Activated CD4-positive, alpha-beta T cell treated with anti-CD3 and anti-CD28 coated beads for 36 hours (primary cell): ENCODE measurements at regions of chr1 and their contacts with region 1.

Region 1: GRCh38 chr1:154404984-154405761 is at the start of gene IL6R:
- DNase-seq: peak; percentile 85
- ATAC-seq: peak; percentile 35
- H3K4me3 Mint-ChIP-seq: peak within 1 kb of the TSS; percentile 83
- H3K27ac Mint-ChIP-seq: peak within 1 kb of the TSS; percentile 95
- H3K4me1 Mint-ChIP-seq: peaks cover 78% of the 10 kb centered on the region
- H3K27me3 Mint-ChIP-seq: no peaks in the 10 kb centered on the region
- total RNA-seq, gene IL6R: 13.1 to 14.0 TPM

Region 2: DNA sequence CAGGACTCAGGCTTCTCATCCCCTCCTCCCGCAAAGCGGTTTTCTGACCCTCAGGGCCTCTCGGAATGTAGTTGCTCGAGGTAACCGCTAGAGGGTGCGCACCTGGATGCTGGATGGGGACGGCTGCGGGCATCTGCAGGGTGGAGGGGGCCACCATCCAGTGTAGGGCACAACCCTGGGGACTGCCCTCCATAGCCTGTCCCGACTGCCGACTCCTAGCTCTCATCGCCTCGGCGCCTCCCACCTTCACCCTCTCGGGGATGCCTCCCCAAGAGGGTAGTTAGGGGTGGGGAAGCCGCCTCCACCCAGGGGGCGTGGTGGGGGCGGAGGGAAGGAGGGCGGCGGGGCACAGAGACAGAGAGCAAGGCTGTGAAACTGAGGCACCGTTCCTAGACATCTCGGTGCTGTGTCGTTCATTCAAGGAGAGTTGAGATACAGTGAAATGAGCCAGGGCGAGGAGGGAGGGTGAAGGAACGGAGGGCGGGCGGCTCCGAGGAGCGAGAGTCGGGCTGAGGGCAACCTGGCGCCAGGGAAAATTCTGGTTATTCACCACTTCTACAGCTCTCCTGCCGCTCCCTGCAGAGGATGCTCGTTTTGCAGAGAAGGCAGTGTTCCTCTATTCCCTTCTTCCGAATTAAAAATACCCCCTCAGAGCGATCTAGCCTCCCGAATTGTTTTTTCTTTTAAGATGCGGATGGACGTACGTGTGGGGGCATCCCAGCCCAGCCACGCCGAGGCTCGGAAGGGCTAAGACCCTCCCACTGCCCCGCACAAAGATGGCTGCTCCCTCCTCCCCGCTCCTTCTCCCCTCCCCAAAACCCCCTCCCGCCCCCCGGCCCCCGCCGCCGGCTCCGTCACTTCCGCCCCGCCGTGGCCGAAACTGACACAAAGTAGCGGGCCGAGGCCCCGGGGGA is 80.2 kb before region 1 on chr1 and contains the start of gene ATP8B2:
- CTCF ChIA-PET with region 1: interaction called, 7 read pairs
- POLR2A ChIA-PET with region 1: no interaction called
- intact Hi-C with region 1: loop called in 1 of 2 experiments (anchors 1 kb)
- DNase-seq: peak; percentile 92
- ATAC-seq: peak; percentile 70
- H3K4me3 Mint-ChIP-seq: peak within 1 kb of the TSS; percentile 99
- H3K27ac Mint-ChIP-seq: peak within 1 kb of the TSS; percentile 94
- H3K4me1 Mint-ChIP-seq: peaks cover 39% of the 10 kb centered on the region
- H3K27me3 Mint-ChIP-seq: no peaks in the 10 kb centered on the region
- total RNA-seq, gene ATP8B2: 48.2 TPM

Region 3: GRCh38 chr1:154352581-154353459 is 52.4 kb before region 1 on chr1:
- CTCF ChIA-PET with region 1: interaction called, 5 read pairs
- POLR2A ChIA-PET with region 1: no interaction called
- intact Hi-C with region 1: loop called (anchors 2 to 5 kb)
- DNase-seq: peak; percentile 80
- ATAC-seq: peak; percentile 84
- H3K4me3 Mint-ChIP-seq: peak overlapping the region; percentile 72
- H3K27ac Mint-ChIP-seq: peak overlapping the region; percentile 81
- H3K4me1 Mint-ChIP-seq: peaks cover 32% of the 10 kb centered on the region
- H3K27me3 Mint-ChIP-seq: no peaks in the 10 kb centered on the region

Region 4: DNA sequence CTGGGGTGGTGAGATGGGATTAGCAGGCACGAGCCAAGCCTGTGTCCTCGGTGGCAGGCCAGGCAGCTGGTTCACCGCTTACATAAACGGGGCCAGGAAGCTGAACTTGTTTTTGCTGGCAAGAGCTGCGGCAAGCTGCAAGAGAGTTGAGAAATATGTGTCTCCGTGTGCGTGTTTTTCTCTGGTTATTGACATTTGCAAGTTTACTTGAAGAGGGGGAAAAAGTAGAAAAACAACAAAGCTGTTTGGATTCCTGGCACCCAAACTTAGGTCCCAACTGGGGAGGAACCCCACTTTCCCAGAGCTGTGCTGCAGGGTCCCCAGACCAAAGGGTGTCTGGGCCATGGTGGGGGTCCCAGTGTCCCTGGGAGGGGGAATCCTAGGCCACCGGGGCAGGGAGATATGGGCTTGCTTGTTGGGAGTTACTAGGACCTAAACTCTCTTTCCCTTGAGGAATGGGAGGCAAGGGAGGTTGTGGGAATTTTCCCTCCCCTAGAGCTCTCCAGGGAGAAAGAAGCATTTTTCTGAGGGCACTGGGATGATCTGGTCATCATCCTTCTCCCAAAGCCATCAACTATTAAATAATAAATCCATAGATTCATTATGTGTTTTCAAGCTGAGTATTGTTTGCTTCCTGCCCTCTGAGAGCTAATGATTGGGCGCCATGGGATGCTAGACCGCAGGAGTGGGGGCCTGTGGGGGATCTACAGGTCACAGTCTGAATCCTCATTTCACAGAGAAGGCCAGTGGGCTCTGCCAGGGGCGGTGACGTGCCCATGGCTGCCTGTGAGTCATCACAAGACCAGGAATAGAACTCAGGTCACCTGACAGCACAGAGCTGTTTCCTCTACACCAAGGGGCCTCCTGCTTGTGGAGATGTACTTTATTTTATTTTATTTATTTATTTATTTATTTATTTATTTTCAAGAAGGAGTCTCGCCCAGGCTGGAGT is 14.7 kb after region 1 on chr1:
- CTCF ChIA-PET with region 1: interaction called, 20 read pairs
- POLR2A ChIA-PET with region 1: interaction called, 3 read pairs
- intact Hi-C with region 1: loop called in 1 of 2 experiments (anchors 2 kb)
- DNase-seq: peak; percentile 80
- ATAC-seq: peak; percentile 78
- H3K4me3 Mint-ChIP-seq: peak overlapping the region; percentile 61
- H3K27ac Mint-ChIP-seq: peak overlapping the region; percentile 92
- H3K4me1 Mint-ChIP-seq: peaks cover 89% of the 10 kb centered on the region
- H3K27me3 Mint-ChIP-seq: no peaks in the 10 kb centered on the region

Region 5: GRCh38 chr1:154442006-154442740 is 37.0 kb after region 1 on chr1:
- CTCF ChIA-PET with region 1: interaction called, 19 read pairs
- POLR2A ChIA-PET with region 1: interaction called, 12 read pairs
- intact Hi-C with region 1: loop called (anchors 1 to 2 kb)
- DNase-seq: peak; percentile 37
- ATAC-seq: no peak
- H3K4me3 Mint-ChIP-seq: no peak overlapping the region
- H3K27ac Mint-ChIP-seq: peak overlapping the region; percentile 63
- H3K4me1 Mint-ChIP-seq: peaks cover 72% of the 10 kb centered on the region
- H3K27me3 Mint-ChIP-seq: no peaks in the 10 kb centered on the region

Region 6: DNA sequence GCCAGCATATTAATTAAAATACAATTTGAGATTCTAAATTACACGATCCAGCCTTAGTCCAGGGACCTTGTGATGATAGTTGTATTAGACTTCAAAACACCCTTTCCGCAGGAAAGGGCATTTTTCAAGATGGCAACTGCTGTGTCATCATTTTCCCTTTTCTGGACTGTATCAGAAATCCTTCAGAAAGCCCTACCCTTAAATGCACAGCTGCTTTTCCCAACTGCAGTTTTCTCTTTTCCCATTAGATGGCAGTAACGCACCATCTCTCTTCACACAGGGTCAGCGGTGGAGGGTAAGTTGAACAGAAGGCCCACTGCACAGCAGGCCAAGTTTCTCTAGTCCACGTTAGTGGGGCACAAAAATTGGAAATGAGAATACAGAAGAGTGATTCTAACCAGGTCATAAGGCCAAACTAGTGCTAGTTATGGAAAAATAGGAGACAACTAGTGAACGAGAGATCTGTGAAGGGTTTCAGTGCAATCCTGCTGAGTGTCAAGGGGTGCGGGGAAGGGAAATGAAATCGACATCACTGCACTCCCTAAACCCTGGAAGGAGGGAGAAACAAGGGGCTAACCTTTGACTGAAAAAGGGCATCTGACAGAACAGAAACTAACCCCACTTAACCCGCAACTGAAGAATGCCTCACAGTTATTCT is 74.7 kb after region 1 on chr1:
- CTCF ChIA-PET with region 1: interaction called, 4 read pairs
- POLR2A ChIA-PET with region 1: interaction called, 3 read pairs
- intact Hi-C with region 1: loop called (anchors 2 kb)
- DNase-seq: peak; percentile 67
- ATAC-seq: peak; percentile 84
- H3K4me3 Mint-ChIP-seq: no peak overlapping the region
- H3K27ac Mint-ChIP-seq: no peak overlapping the region
- H3K4me1 Mint-ChIP-seq: peaks cover 27% of the 10 kb centered on the region
- H3K27me3 Mint-ChIP-seq: no peaks in the 10 kb centered on the region

Region 7: DNA sequence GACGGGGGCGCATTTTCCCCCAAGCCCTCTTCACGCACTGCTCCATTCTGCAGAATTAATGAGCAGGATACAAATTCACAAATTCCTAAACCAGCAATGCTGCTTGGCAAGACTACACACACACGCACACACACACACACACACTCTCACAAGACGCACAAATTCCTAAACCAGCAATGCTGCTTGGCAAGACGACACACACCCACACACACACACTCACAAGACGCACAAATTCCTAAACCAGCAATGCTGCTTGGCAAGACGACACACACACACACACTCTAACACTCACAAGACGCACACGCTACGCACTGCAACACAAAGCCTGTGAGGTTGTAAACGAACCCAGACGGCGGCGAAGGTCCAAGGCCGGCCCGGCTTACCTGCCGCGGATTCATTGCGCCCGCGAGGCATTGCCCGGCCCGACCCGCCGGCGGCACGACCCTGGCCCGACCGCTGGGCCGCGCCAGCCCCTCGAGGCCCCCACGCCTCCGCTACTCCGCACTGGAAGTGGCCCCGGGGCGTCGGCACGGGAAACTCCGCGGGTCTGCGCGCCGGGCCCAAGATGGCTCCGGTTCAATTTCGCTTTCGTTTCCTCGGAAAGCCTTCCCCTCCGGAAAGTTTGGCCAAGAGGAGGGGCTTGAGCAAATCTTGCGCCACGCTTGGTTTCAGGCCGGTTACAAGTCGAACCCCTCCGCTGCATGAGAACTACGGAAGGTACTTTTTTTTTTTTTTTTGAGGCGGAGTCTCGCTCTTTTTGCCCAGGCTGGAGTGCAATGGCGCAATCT is 202.6 kb after region 1 on chr1 and contains the start of gene ADAR:
- CTCF ChIA-PET with region 1: no interaction called
- POLR2A ChIA-PET with region 1: no interaction called
- intact Hi-C with region 1: loop called in 1 of 2 experiments (anchors 5 kb)
- DNase-seq: peak; percentile 95
- ATAC-seq: peak; percentile 69
- H3K4me3 Mint-ChIP-seq: peak within 1 kb of the TSS; percentile 95
- H3K27ac Mint-ChIP-seq: peak within 1 kb of the TSS; percentile 99
- H3K4me1 Mint-ChIP-seq: peaks cover 75% of the 10 kb centered on the region
- H3K27me3 Mint-ChIP-seq: no peaks in the 10 kb centered on the region
- total RNA-seq, gene ADAR: 310 to 332 TPM